Activated T-helper 2 cell treated with anti-CD3 and anti-CD28 coated beads, Interferon-gamma antibody, Interleukin-2, Interleukin-4, amounts not matched to agents 10 μg/mL and 5 μg/mL and 100 μg/mL, durations not matched to agents 14 hours and 24 hours and 36 hours (primary cell): ENCODE measurements at regions of chr4 and their contacts with region 1.

Region 1: DNA sequence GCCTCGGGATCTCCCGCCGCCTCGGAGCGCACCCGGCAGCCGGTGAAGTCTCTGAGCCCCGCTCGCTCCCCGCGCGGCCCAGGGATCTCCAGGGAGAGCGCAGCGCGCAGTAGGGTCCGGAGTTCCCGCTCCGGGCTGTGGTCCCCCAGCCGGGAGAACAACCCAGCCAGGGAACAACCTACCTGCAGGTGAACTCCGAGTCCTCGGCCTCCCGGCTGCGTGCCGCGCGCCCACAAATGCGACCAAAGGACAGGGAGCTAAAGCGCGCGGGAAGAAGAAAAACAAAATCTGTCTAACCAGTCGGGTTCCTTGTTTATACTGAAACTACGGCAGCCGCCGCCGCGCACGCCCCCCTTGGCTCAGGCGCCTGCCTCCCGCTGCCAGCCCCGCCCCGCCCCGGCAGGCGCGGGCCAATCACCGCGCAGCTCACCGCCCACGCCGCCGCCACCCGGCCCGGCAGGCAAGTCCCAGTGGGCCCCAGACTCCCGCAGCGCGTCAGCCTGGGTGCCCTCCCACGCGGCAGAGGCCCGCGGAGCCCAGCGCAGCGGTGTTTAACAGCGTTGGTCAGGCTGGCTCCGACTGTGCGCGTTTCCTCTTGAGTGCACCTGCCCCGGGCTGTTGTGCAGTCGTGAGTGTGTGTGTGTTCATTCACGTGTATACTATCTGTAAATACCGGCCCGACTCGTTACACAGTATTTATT is at the start of gene RASGEF1B:
- DNase-seq: peak; percentile 86
- H3K4me3 Mint-ChIP-seq: peak within 1 kb of the TSS; percentile 85
- H3K27ac Mint-ChIP-seq: peak within 1 kb of the TSS; percentile 70
- H3K4me1 Mint-ChIP-seq: peaks cover 33% of the 10 kb centered on the region
- H3K27me3 Mint-ChIP-seq: peaks cover 39% of the 10 kb centered on the region
- total RNA-seq, gene RASGEF1B: 0.39 and 0.55 TPM in 2 replicates

Region 2: GRCh38 chr4:81405894-81406401 is 65.8 kb before region 1 on chr4:
- intact Hi-C with region 1: loop called (anchors 2 kb)
- DNase-seq: no peak
- H3K4me3 Mint-ChIP-seq: no peak overlapping the region
- H3K27ac Mint-ChIP-seq: no peak overlapping the region
- H3K4me1 Mint-ChIP-seq: peaks cover 3% of the 10 kb centered on the region
- H3K27me3 Mint-ChIP-seq: peaks cover 2% of the 10 kb centered on the region

Region 3: GRCh38 chr4:81454499-81454898 is 17.2 kb before region 1 on chr4:
- intact Hi-C with region 1: no loop called
- DNase-seq: no peak
- H3K4me3 Mint-ChIP-seq: no peak overlapping the region
- H3K27ac Mint-ChIP-seq: no peak overlapping the region
- H3K4me1 Mint-ChIP-seq: peaks cover 6% of the 10 kb centered on the region
- H3K27me3 Mint-ChIP-seq: no peaks in the 10 kb centered on the region

Region 4: GRCh38 chr4:81505004-81505598 is 33.4 kb after region 1 on chr4:
- intact Hi-C with region 1: loop called (anchors 2 kb)
- DNase-seq: peak; percentile 36
- H3K4me3 Mint-ChIP-seq: no peak overlapping the region
- H3K27ac Mint-ChIP-seq: no peak overlapping the region
- H3K4me1 Mint-ChIP-seq: peaks cover 18% of the 10 kb centered on the region
- H3K27me3 Mint-ChIP-seq: peaks cover 29% of the 10 kb centered on the region

Region 5: GRCh38 chr4:81648576-81649275 is 177.0 kb after region 1 on chr4:
- intact Hi-C with region 1: loop called (anchors 5 kb)
- DNase-seq: peak; percentile 22
- H3K4me3 Mint-ChIP-seq: peak overlapping the region; percentile 27
- H3K27ac Mint-ChIP-seq: peak overlapping the region; percentile 1
- H3K4me1 Mint-ChIP-seq: peaks cover 46% of the 10 kb centered on the region
- H3K27me3 Mint-ChIP-seq: no peaks in the 10 kb centered on the region

Region 6: GRCh38 chr4:81844717-81845116 is 373.0 kb after region 1 on chr4:
- intact Hi-C with region 1: loop called (anchors 1 kb)
- DNase-seq: peak; percentile 44
- H3K4me3 Mint-ChIP-seq: no peak overlapping the region
- H3K27ac Mint-ChIP-seq: no peak overlapping the region
- H3K4me1 Mint-ChIP-seq: peaks cover 3% of the 10 kb centered on the region
- H3K27me3 Mint-ChIP-seq: peaks cover 4% of the 10 kb centered on the region

Region 7: GRCh38 chr4:82284858-82285805 is 813.4 kb after region 1 on chr4:
- intact Hi-C with region 1: loop called (anchors 1 kb)
- DNase-seq: peak; percentile 99
- H3K4me3 Mint-ChIP-seq: peak overlapping the region; percentile 76
- H3K27ac Mint-ChIP-seq: no peak overlapping the region
- H3K4me1 Mint-ChIP-seq: peaks cover 12% of the 10 kb centered on the region
- H3K27me3 Mint-ChIP-seq: peaks cover 26% of the 10 kb centered on the region